Left ventricle myocardium superior (tissue), 1 donor: ENCODE measurements at regions of chr9 and their contacts with region 1.

Region 1: GRCh38 chr9:35470894-35471293 is 19.0 kb upstream of the RUSC2 start:
- DNase-seq: no peak
- ATAC-seq: no peak

Region 2: GRCh38 chr9:35116898-35117551 is 353.9 kb before region 1 on chr9:
- intact Hi-C with region 1: loop called (anchors 10 kb)
- DNase-seq: peak; percentile 91
- ATAC-seq: peak; percentile 79

Region 3: GRCh38 chr9:35306283-35306682 is 164.6 kb before region 1 on chr9:
- intact Hi-C with region 1: loop called (anchors 10 kb)
- DNase-seq: no peak
- ATAC-seq: no peak

Region 4: GRCh38 chr9:35415386-35416096 is 55.4 kb before region 1 on chr9:
- intact Hi-C with region 1: no loop called
- DNase-seq: no peak
- ATAC-seq: no peak

Region 5: GRCh38 chr9:36551129-36551528 is 1080.2 kb after region 1 on chr9:
- intact Hi-C with region 1: no loop called
- DNase-seq: no peak
- ATAC-seq: no peak